ENCODE measurements at regions of chr13 and their contacts with region 1.

Region 1: GRCh38 chr13:99501184-99501847 is at the start of gene TM9SF2:
- DNase-seq: peak; percentile 95 to 99
- H3K4me3 ChIP-seq: peak within 1 kb of the TSS; percentile 61 to 82
- H3K27ac ChIP-seq: peak within 1 kb of the TSS; percentile 62 to 83
- H3K4me1 ChIP-seq: peaks cover 0 to 71% (median 42%) of the 10 kb centered on the region in 4 donors
- H3K27me3 ChIP-seq: no peaks in the 10 kb centered on the region
- CTCF ChIP-seq: no peak

Region 2: DNA sequence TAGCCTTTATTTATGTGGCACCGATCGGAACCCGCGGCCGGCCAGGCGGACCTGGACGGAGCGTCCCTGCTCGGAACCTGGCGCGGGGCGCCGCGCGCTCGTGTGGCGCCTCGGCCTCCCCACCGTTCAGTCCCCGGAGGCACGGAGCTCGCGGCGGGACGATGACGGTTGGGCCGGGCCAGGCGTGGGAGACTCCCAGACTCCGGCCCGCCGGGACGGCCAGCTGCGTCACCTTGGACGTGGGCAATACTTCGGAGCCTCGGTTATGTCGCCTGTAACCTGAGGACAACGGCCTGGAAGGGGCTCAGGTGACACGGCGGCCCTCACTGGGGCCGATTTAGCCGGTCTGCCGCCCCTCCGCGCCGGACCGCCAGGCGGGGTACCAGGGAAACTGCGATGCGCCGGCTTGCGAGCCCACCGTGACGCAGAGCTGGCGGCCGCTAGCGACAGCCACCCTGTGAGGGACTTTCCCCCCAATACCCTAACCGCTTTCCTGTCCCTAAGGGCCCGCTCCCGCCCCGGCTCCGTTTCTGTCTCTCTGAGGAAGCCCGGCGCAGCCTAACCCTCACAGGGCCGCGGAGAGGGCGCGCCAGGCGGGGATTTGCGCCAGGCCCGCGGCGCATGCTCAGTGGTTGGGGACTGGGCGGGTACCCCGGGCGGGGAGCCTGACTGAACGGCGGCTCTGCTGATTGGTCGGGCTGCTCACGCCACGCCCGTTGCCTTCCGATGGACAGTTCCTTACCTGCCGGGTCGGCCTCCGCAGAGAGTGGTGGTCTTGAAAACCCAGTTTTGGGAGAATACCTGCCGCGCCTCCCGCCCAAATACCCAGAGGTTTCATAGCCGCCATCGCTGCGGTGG is 414.0 kb before region 1 on chr13:
- intact Hi-C with region 1: loop called (anchors 10 kb)
- DNase-seq: peak; percentile 84 to 95
- H3K4me3 ChIP-seq: peak overlapping the region; percentile 66 to 81
- H3K27ac ChIP-seq: peak overlapping the region; percentile 95 to 99
- H3K4me1 ChIP-seq: peaks cover 0 to 22% (median 16%) of the 10 kb centered on the region in 4 donors
- H3K27me3 ChIP-seq: no peaks in the 10 kb centered on the region
- CTCF ChIP-seq: peak; percentile 22 to 38

Region 3: GRCh38 chr13:99307648-99308339 is 193.5 kb before region 1 on chr13:
- intact Hi-C with region 1: loop called (anchors 10 kb)
- DNase-seq: peak; percentile 40 to 76
- H3K4me3 ChIP-seq: peak overlapping the region; percentile 19 to 29
- H3K27ac ChIP-seq: peak overlapping the region; percentile 76 to 78
- H3K4me1 ChIP-seq: peaks cover 0 to 53% (median 14%) of the 10 kb centered on the region in 4 donors
- H3K27me3 ChIP-seq: no peaks in the 10 kb centered on the region
- CTCF ChIP-seq: no peak

Region 4: DNA sequence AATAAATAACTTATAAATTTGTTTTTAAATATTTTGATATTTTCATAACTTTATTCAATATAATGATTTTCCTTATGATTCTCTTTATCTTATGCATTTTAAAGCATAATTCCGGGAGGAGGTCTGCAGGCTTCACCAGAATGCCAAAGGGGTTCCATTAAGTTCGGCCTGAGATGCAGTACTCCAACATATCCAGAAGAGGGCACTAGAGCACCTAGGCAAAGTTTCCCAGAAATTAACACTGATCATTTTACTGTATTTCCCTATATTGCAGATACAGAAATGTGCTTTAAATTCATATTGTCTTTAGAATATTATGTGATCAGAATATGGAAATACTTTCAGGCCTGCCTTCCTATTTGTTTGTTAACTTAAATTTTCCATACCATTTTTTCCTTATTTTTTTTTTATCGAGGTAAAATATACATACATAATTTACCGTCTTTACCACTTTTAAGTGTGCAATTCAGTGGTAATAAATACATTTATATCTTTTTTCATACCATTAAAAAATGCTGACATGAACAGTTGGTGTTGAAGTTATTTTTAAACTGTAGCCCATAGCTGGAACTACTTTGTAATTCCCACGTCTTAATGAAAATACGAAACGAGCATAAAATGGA is 58.9 kb before region 1 on chr13:
- intact Hi-C with region 1: loop called (anchors 5 kb)
- DNase-seq: peak in 1 of 2 donors; percentile 39
- H3K4me3 ChIP-seq: no peak overlapping the region
- H3K27ac ChIP-seq: no peak overlapping the region
- H3K4me1 ChIP-seq: no peaks in the 10 kb centered on the region
- H3K27me3 ChIP-seq: peaks cover 0 to 25% of the 10 kb centered on the region in 2 donors
- CTCF ChIP-seq: peak; percentile 81 to 92

Region 5: GRCh38 chr13:99459099-99459850 is 42.0 kb before region 1 on chr13:
- intact Hi-C with region 1: no loop called
- DNase-seq: no peak
- H3K4me3 ChIP-seq: no peak overlapping the region
- H3K27ac ChIP-seq: no peak overlapping the region
- H3K4me1 ChIP-seq: no peaks in the 10 kb centered on the region
- H3K27me3 ChIP-seq: peaks cover 0 to 5% of the 10 kb centered on the region in 2 donors
- CTCF ChIP-seq: no peak

Region 6: DNA sequence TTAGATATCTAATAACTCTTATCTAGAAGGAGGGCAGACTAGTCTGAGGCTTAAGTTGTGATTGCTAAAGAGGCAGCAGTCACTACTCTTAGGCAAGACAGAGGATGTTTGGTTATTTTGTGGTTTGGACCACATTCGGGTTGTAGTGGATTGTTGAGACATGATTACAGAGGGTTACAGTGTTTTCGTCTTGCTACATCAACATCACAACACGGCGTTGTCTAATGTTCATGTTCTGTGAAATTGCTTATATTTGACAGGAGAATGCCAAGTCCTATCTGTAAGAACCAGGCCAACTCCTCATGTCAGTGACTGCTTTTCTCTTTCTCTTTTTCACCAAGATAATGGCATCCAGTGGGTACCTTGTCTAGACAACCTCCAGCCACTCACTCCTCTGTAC is 16.8 kb before region 1 on chr13:
- intact Hi-C with region 1: no loop called
- DNase-seq: no peak
- H3K4me3 ChIP-seq: no peak overlapping the region
- H3K27ac ChIP-seq: no peak overlapping the region
- H3K4me1 ChIP-seq: peaks cover 0 to 10% (median 1%) of the 10 kb centered on the region in 4 donors
- H3K27me3 ChIP-seq: no peaks in the 10 kb centered on the region
- CTCF ChIP-seq: no peak

Region 7: GRCh38 chr13:99606324-99607066 is 105.2 kb after region 1 on chr13:
- intact Hi-C with region 1: loop called (anchors 10 kb)
- DNase-seq: peak; percentile 85 to 93
- H3K4me3 ChIP-seq: peak within 1 kb of the TSS; percentile 78 to 80
- H3K27ac ChIP-seq: peak within 1 kb of the TSS; percentile 79 to 80
- H3K4me1 ChIP-seq: peaks cover 0 to 15% (median 8%) of the 10 kb centered on the region in 4 donors
- H3K27me3 ChIP-seq: no peaks in the 10 kb centered on the region
- CTCF ChIP-seq: no peak

Measured in tibial artery (tissue), 4 donors.